ENCODE measurements at regions of chr15 and their contacts with region 1.

Region 1: GRCh38 chr15:31887246-31887645 is 143.1 kb upstream of the CHRNA7 start:
- DNase-seq: peak; percentile 70
- H3K4me3 ChIP-seq: peak overlapping the region in 1 of 2 experiments; percentile 19; a peak in 1 of 4 replicates
- H3K27ac ChIP-seq: 0 out of 4 replicates have a peak overlapping the region, but pooled peaks of 1 of the 2 experiments have one; percentile 16
- H3K4me1 ChIP-seq: peaks cover 0 to 8% of the 10 kb centered on the region in 2 experiments; a peak in 2 of 4 replicates
- H3K27me3 ChIP-seq: no peaks in the 10 kb centered on the region
- CTCF ChIP-seq: no peak
- EP300 ChIP-seq: no peak
- RAD21 ChIP-seq: peak; percentile 59

Region 2: GRCh38 chr15:31870328-31871165 is 16.7 kb before region 1 on chr15:
- CTCF ChIA-PET with region 1: interaction called, 24 read pairs
- POLR2A ChIA-PET with region 1: no interaction called
- DNase-seq: peak; percentile 97
- H3K4me3 ChIP-seq: peak within 1 kb of the TSS; percentile 63 to 64
- H3K27ac ChIP-seq: peak within 1 kb of the TSS in 1 of 2 experiments; percentile 62; a peak in 2 of 4 replicates
- H3K4me1 ChIP-seq: peaks cover 0 to 21% of the 10 kb centered on the region in 2 experiments; a peak in 1 of 4 replicates
- H3K27me3 ChIP-seq: peaks cover 7% of the 10 kb centered on the region; the same call in 1 of the 2 replicates
- CTCF ChIP-seq: no peak
- EP300 ChIP-seq: no peak
- RAD21 ChIP-seq: no peak

Region 3: DNA sequence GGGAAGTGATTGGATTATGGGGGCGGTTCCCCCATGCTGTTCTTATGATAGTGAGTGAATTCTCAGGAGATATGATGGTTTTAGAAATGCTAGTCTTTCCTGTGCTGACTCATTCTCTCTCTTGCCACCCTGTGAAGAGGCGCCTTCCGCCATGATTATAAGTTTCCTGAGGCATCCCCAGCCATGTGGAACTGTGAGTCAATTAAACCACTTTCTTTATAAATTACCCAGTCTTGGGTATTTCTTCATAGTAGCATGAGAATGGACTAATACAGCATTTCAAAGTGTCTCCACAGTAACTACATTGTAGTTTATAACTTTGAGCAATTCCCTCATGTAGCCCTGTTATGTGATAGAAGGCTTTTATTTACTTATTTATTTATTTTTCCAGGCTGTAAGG is 14.3 kb after region 1 on chr15:
- CTCF ChIA-PET with region 1: interaction called, 14 read pairs
- POLR2A ChIA-PET with region 1: no interaction called
- DNase-seq: no peak
- H3K4me3 ChIP-seq: no peak overlapping the region
- H3K27ac ChIP-seq: no peak overlapping the region
- H3K4me1 ChIP-seq: no peaks in the 10 kb centered on the region; a peak in 1 of 4 replicates
- H3K27me3 ChIP-seq: no peaks in the 10 kb centered on the region
- CTCF ChIP-seq: no peak
- EP300 ChIP-seq: no peak
- RAD21 ChIP-seq: no peak

Measured in SK-N-SH (cell line).